Heart right ventricle (tissue), 16 donors: ENCODE measurements at regions of chr2 and their contacts with region 1.

Region 1: GRCh38 chr2:46706264-46706983 is 209.2 kb downstream of the MCFD2 start:
- DNase-seq: no peak
- ATAC-seq: peak in 1 of 8 donors; percentile 29
- H3K4me3 ChIP-seq: no peak overlapping the region
- H3K27ac ChIP-seq: peak overlapping the region in 2 of 10 donors; percentile 15 to 48
- H3K4me1 ChIP-seq: peaks cover 2 to 84% (median 71%) of the 10 kb centered on the region in 9 donors
- H3K27me3 ChIP-seq: no peaks in the 10 kb centered on the region
- CTCF ChIP-seq: no peak

Region 2: DNA sequence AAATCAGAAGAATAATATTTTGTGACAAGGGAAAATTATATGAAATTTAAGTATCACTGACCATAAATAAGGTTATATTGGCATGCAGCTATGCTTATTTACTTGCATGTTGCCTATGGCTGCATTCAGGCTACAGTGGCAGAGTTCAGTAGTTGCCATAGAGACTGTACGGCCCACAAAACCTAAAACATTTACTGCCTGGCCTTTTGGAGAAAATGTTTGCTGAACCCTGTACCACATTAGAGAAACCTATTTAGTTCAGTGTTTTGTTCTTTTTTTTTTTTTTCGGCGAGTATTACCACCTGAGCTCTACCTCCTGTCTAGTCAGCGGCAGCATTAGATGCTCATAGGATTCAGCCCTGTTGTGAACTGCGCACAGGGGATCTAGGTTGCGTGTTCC is 45.5 kb after region 1 on chr2:
- intact Hi-C with region 1: loop called in 1 of 10 experiments (anchors 5 kb)
- DNase-seq: no peak
- ATAC-seq: no peak
- H3K4me3 ChIP-seq: no peak overlapping the region
- H3K27ac ChIP-seq: no peak overlapping the region
- H3K4me1 ChIP-seq: peaks cover 0 to 89% (median 47%) of the 10 kb centered on the region in 9 donors
- H3K27me3 ChIP-seq: no peaks in the 10 kb centered on the region
- CTCF ChIP-seq: no peak